PC-3 (cell line): ENCODE measurements at regions of chr2 and their contacts with region 1.

Region 1: DNA sequence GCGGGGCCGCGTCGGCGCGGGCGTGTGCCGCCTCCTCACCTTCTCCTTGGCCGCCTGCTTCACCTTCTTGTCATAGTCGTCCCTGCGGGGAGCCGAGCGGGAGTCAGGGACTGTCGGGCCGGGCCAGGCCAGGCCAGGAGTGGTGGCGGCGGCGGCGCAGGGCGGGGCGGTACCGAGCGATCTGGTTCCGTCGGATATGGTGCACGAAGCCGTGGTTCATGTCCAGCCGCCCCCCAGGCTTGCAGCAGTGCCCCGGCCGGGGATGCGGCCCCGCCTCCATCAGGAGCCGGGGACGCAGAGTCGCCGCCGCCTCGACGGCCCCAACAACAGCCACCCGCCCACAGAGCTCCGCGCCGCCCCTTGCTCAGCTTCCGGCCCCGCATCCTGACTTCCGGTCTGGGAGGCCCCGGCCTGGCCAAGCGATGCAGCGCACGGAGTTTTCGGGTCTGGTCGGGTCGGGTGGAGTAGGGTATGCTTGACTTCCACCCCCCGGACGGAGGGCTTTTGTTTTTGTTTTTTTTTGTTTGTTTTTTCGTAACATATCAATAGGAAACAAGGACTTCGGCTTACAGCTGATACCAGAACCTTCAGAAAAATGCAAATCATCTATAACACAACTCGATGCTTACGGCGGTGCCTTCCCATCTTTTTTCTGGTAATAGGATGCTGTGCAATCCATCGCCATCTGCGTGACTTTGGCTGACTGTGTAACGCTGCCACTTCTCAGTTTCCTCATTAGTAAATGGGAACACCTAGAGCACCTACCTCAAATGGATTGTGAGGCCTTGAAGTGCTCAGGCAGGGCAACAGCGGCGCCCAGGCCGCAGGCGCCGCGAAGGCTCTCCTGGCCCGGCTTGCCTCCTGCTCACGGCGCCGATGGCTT is at the start of gene C2orf68:
- DNase-seq: peak; percentile 81
- ATAC-seq: peak; percentile 71
- H3K4me3 ChIP-seq: peak within 1 kb of the TSS; percentile 86
- H3K27ac ChIP-seq: peak within 1 kb of the TSS; percentile 48
- H3K4me1 ChIP-seq: peaks cover 9% of the 10 kb centered on the region
- H3K27me3 ChIP-seq: no peaks in the 10 kb centered on the region
- CTCF ChIP-seq: no peak
- total RNA-seq, gene C2orf68: 26.6 and 27.6 TPM in 2 replicates

Region 2: GRCh38 chr2:84991404-84992151 is 620.4 kb before region 1 on chr2:
- CTCF ChIA-PET with region 1: no interaction called
- POLR2A ChIA-PET with region 1: no interaction called
- intact Hi-C with region 1: no loop called
- DNase-seq: peak; percentile 80
- ATAC-seq: peak; percentile 75
- H3K4me3 ChIP-seq: no peak overlapping the region
- H3K27ac ChIP-seq: peak overlapping the region; percentile 56
- H3K4me1 ChIP-seq: peaks cover 24% of the 10 kb centered on the region
- H3K27me3 ChIP-seq: no peaks in the 10 kb centered on the region
- CTCF ChIP-seq: no peak

Region 3: DNA sequence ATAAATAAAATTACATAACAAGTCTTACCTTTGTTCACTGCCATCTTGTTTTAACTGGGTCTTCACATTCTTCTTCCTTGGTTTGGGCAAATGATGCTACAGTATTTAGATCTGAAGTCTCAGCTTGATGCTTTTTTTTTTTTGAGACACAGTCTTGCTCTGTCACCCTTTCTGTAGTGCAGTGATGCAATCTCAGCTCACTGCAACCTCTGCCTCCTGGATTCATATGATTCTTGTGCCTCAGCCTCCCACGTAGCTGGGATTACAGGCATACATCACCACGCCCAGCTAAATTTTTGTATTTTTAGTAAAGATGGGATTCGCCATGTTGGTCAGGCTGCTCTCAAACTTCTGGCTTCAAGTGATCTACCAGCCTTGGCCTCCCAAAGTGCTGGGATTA is 126.1 kb before region 1 on chr2:
- CTCF ChIA-PET with region 1: no interaction called
- POLR2A ChIA-PET with region 1: interaction called, 11 read pairs
- intact Hi-C with region 1: no loop called
- DNase-seq: no peak
- ATAC-seq: no peak
- H3K4me3 ChIP-seq: no peak overlapping the region
- H3K27ac ChIP-seq: no peak overlapping the region
- H3K4me1 ChIP-seq: no peaks in the 10 kb centered on the region
- H3K27me3 ChIP-seq: no peaks in the 10 kb centered on the region
- CTCF ChIP-seq: no peak

Region 4: DNA sequence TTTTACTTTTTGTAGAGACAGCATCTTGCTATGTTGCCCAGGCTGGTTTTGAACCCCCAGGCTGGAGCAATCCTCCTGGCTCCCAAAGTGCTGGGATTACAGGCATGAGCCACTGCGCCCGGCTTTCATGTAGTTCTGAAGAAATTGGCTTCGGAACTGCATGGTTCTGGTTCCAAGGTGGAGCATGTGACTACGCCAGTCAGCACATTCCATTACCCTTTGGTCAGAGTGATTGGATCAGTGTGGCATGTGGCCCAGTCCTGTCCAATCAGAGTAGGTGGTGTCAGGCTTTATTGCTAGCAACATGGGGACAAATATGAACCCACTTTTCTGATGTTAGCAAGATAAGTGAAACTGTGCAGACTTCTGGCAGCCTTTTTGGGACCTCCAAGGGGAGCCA is 125.5 kb after region 1 on chr2:
- CTCF ChIA-PET with region 1: no interaction called
- POLR2A ChIA-PET with region 1: no interaction called
- intact Hi-C with region 1: no loop called
- DNase-seq: peak; percentile 22
- ATAC-seq: no peak
- H3K4me3 ChIP-seq: no peak overlapping the region
- H3K27ac ChIP-seq: no peak overlapping the region
- H3K4me1 ChIP-seq: peaks cover 11% of the 10 kb centered on the region
- H3K27me3 ChIP-seq: no peaks in the 10 kb centered on the region
- CTCF ChIP-seq: no peak

Region 5: GRCh38 chr2:86105252-86105968 is 493.5 kb after region 1 on chr2 and contains the start of gene POLR1A:
- CTCF ChIA-PET with region 1: no interaction called
- POLR2A ChIA-PET with region 1: no interaction called
- intact Hi-C with region 1: loop called (anchors 5 kb)
- DNase-seq: peak; percentile 85
- ATAC-seq: peak; percentile 92
- H3K4me3 ChIP-seq: peak within 1 kb of the TSS; percentile 84
- H3K27ac ChIP-seq: peak within 1 kb of the TSS; percentile 55
- H3K4me1 ChIP-seq: peaks cover 20% of the 10 kb centered on the region
- H3K27me3 ChIP-seq: no peaks in the 10 kb centered on the region
- CTCF ChIP-seq: no peak
- total RNA-seq, gene POLR1A: 25.1 and 36.5 TPM in 2 replicates

Region 6: GRCh38 chr2:86249579-86250391 is 637.8 kb after region 1 on chr2:
- CTCF ChIA-PET with region 1: no interaction called
- POLR2A ChIA-PET with region 1: interaction called, 11 read pairs
- intact Hi-C with region 1: no loop called
- DNase-seq: peak; percentile 57
- ATAC-seq: no peak
- H3K4me3 ChIP-seq: no peak overlapping the region
- H3K27ac ChIP-seq: no peak overlapping the region
- H3K4me1 ChIP-seq: no peaks in the 10 kb centered on the region
- H3K27me3 ChIP-seq: peaks cover 29% of the 10 kb centered on the region
- CTCF ChIP-seq: no peak